GM13977 (cell line): ENCODE measurements at regions of chr11 and their contacts with region 1.

Region 1: GRCh38 chr11:86938900-86939880 is 16.0 kb downstream of the FZD4 start:
- DNase-seq: peak; percentile 32
- CTCF ChIP-seq: peak; percentile 59

Region 2: DNA sequence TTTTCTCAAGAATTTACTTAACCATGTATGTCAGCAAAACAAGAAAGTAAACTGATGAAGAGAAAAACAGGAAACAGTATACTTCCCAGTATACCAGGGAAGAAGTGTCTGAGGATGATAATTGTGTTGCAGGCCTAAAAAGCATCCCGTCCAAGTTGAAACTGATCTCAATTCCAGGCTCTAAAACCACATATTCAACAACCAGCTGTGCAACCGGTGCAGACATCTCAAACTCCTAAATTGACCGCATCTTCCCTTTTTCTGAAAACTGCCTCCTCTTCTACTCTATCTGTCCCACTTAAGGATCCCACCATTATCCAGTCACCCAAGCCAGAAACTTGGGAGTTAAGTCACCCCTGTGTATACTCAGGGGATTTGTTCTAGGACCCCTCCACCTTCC is 1036.8 kb before region 1 on chr11:
- in situ Hi-C with region 1: no loop called
- DNase-seq: no peak
- CTCF ChIP-seq: no peak

Region 3: DNA sequence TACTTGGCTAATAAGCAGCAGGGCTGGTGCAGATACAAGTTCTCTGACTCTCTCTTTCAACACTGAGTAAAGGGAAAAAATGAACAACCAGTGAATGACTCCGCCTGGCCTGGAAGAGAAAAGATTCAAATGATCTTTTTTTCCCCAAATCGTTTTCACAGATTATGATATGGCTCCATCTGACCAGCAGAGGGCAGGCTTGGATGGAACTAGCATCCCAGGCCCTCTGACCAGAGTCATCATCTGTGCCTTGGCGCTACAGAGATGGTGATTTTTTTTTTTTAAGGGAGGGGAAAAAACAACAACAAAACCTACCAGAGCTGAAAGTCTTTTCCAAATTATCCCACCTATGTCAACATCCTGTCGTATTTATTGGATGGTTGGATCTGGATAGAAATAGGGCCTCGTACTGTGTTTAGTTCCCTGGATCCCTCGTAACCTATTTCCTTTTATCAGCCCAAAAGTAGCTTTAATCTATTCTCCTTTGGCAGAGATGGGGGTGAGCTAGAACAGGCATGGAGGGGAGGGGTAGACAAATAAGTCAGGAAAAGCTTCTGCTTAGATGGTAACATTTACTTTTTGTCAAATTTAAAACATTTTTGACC is 69.1 kb before region 1 on chr11:
- in situ Hi-C with region 1: no loop called
- DNase-seq: peak; percentile 60
- CTCF ChIP-seq: peak; percentile 79

Region 4: DNA sequence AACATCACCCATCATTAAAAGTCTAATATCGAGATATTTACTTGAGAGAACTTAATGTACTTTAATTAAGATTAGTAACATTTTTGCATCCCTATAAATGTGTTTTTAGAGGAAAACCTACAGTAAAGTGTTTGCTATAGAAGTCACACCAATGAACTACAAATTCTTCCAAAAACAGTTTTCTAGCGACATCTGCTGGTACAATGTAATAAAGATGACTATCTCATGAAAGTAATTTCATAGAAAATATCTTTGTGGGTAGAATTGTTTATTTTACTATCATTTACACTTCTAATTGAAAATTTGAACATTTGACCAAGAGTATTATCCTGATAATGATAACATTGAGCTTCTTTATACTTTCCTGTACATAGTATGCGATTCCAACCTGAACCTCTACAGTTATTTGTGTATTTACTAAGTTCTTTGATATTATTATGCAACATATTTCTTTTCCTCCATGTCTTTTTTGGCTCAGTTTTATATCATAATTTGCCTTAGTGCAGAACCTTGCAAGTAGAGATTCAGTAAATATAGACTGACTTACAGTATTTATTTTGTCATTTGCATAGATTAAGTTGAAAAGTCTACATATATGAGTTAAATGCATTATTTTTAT is 351.2 kb after region 1 on chr11:
- in situ Hi-C with region 1: loop called (anchors 25 kb)
- DNase-seq: peak; percentile 67
- CTCF ChIP-seq: peak; percentile 67

Region 5: GRCh38 chr11:87421422-87421821 is 482.2 kb after region 1 on chr11:
- in situ Hi-C with region 1: loop called (anchors 25 kb)
- DNase-seq: peak; percentile 38
- CTCF ChIP-seq: peak; percentile 74

Region 6: DNA sequence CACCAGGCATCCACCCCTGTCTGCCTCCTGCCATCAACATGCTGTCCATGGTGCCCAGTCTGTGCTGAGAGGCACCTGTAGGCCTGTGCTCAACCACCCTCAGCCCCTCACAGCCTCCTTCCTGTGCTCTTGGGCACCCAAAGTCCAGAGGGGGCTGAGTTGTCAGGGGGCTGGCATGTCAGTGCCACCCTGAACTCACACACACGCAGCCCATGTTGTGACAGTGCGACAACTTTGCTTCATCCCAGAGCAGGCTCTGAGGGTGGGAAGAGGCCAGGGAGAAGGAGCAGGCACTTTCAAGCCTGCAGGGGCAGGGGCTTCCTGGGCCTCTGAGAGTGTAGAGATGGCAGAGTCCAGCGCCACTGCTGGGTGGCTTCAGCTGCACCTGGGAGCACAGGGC is 589.6 kb after region 1 on chr11:
- in situ Hi-C with region 1: no loop called
- DNase-seq: no peak
- CTCF ChIP-seq: no peak